HEK293 (cell line): ENCODE measurements at regions of chr9 and their contacts with region 1.

Region 1: DNA sequence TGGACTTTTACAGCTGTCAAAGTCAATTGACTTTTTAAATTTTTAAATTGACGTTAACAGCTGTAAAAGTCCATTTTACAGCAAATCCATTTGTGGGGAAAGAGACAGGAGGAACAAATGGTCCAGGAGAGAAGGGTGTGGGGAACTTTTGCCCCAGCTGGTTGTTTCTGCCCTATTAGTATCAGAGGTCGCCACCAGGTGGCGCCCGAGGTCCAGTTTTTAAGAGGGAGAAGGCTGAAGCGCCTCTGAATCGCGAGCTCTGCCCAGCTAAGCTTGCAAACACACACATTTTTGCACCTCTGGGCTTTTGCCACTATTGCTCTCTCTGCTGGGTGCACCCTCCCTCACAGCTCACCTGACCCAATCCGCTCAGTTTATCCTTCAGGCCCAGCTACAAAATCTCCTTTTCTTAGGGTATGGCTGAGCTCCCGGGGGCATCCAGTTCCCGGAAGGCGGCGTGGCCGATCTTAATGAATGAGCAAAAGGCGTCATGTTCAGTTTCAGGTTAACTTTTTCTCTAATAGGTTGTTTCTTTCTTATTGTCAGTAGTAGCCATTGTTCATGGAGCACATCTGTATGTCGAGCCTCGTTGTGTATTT is 6.3 kb upstream of the TTLL11 start:
- H3K4me3 ChIP-seq: no peak overlapping the region
- H3K27ac ChIP-seq: no peak overlapping the region
- H3K4me1 ChIP-seq: no peaks in the 10 kb centered on the region
- CTCF ChIP-seq: peak; percentile 27; the same call in 1 of the 2 replicates

Region 2: GRCh38 chr9:122116040-122116439 is 16.7 kb after region 1 on chr9:
- CTCF ChIA-PET with region 1: interaction called, 371 read pairs
- POLR2A ChIA-PET with region 1: no interaction called
- H3K4me3 ChIP-seq: no peak overlapping the region
- H3K27ac ChIP-seq: no peak overlapping the region
- H3K4me1 ChIP-seq: no peaks in the 10 kb centered on the region
- CTCF ChIP-seq: no peak

Region 3: DNA sequence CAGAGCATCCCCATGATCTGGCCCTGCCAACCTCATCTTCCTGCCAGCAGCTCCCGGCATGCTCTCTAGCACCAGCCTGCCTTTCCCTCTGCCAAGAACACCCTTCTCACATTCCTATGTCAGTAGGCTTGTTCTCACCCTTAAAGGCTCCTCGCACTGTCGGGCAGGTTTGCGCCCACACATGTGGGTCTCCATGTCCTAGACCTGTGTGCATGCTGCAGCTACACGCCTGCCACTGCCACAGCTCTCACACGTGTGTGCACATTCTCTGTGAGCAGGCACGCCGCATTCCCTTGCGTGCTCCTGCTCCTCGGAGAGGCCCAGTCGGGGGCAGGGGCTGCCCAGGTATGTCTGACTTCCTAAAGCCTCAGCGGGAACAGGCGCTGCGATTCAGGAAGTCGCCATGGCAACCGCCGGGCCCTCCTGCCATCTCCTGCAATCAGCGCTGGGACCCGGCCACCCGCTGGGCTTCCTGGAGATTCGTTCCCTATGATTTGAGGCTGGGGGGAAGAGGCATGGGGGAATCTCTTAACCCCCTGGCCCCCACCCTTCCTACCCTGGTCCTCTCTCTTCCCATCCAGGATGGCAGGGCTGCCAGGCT is 32.1 kb after region 1 on chr9:
- CTCF ChIA-PET with region 1: interaction called, 59 read pairs
- POLR2A ChIA-PET with region 1: no interaction called
- H3K4me3 ChIP-seq: no peak overlapping the region
- H3K27ac ChIP-seq: no peak overlapping the region
- H3K4me1 ChIP-seq: 0 out of 2 replicates have a peak, but pooled peaks cover 3% of the 10 kb centered on the region
- CTCF ChIP-seq: no peak

Region 4: GRCh38 chr9:122350638-122351355 is 251.4 kb after region 1 on chr9:
- CTCF ChIA-PET with region 1: interaction called, 204 read pairs
- POLR2A ChIA-PET with region 1: interaction called, 5 read pairs
- H3K4me3 ChIP-seq: no peak overlapping the region
- H3K27ac ChIP-seq: no peak overlapping the region
- H3K4me1 ChIP-seq: no peaks in the 10 kb centered on the region
- CTCF ChIP-seq: peak; percentile 90

Region 5: GRCh38 chr9:122453677-122454135 is 354.3 kb after region 1 on chr9:
- CTCF ChIA-PET with region 1: interaction called, 10 read pairs
- POLR2A ChIA-PET with region 1: no interaction called
- H3K4me3 ChIP-seq: no peak overlapping the region
- H3K27ac ChIP-seq: no peak overlapping the region
- H3K4me1 ChIP-seq: no peaks in the 10 kb centered on the region
- CTCF ChIP-seq: no peak

Region 6: DNA sequence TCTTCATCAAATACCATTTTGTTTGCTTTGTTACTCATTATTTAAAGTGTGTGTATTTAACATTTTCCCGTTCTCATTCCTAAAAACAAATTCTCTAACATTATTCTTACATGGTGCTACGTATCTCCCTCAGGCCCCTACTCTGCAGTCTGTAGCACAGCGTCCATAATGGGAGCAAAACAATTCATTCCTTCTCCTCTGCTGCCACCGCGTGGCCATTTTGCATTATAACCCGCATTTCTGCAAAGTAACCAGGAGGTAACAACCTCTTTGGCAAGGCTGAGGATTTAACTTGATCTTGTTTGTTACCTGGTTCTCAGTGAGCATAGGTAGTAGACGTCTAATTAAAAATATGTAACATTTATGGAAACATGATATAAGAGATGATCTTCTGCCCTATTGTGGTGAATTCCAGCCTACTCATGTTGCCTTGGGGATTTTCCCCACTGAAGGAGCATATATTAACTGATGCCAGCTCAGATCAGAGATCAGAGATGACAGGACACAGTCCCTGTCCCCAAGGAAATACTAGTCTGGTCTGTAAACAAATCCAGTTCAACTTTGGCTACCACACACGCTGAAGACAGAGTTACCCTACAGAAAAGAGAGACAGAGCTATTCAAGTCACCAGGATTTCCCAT is 711.1 kb after region 1 on chr9:
- CTCF ChIA-PET with region 1: interaction called, 23 read pairs
- POLR2A ChIA-PET with region 1: no interaction called
- H3K4me3 ChIP-seq: no peak overlapping the region
- H3K27ac ChIP-seq: no peak overlapping the region
- H3K4me1 ChIP-seq: no peaks in the 10 kb centered on the region
- CTCF ChIP-seq: peak; percentile 62; the same call in 1 of the 2 replicates